Activated naive CD4-positive, alpha-beta T cell treated with anti-CD3 and anti-CD28 coated beads, Interleukin-2, amount 10 ng/mL, durations not matched to agents 7 days and 5 days (primary cell): ENCODE measurements at regions of chr5 and their contacts with region 1.

Region 1: GRCh38 chr5:138077065-138077696 is 6.7 kb upstream of the WNT8A start:
- DNase-seq: peak; percentile 71
- H3K4me3 Mint-ChIP-seq: no peak overlapping the region
- H3K27ac Mint-ChIP-seq: no peak overlapping the region
- H3K4me1 Mint-ChIP-seq: peaks cover 18% of the 10 kb centered on the region
- H3K27me3 Mint-ChIP-seq: peaks cover 3% of the 10 kb centered on the region

Region 2: GRCh38 chr5:137954131-137954879 is 122.9 kb before region 1 on chr5:
- CTCF ChIA-PET with region 1: no interaction called
- DNase-seq: no peak
- H3K4me3 Mint-ChIP-seq: no peak overlapping the region
- H3K27ac Mint-ChIP-seq: peak overlapping the region; percentile 49
- H3K4me1 Mint-ChIP-seq: no peaks in the 10 kb centered on the region
- H3K27me3 Mint-ChIP-seq: no peaks in the 10 kb centered on the region

Region 3: DNA sequence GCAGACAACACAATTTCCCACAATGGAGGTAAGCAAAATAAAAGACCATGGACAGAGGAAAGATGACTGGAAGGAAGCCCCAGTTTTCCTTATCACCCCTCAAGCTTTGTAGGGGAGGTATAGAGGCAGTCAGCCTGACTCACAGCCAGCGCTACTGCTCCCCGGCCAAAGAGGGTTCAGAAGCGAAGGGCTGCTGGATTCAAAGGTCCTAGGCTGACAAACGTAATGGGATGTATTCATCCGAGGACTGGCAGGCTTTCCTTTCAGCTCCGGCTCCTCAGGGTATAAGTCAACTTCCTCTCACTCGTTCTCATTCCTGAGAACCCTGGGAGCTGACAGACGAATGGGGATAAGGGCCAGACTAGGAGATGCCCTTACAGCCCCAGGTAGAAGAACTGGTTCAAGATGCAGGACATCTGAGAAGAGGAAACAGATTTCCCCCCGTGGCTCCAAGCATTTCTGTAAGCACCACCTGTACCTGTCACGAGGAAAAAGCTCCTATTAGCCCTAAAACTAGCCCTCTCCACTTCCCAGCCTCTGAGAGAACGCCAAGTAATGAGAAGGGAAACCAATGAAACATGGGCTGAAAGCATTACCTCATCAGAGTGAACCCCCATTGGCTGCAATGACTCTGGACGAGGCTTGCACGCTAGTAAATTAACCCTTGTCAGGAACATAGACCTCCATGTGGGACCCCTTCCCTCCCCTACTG is 22.2 kb before region 1 on chr5:
- CTCF ChIA-PET with region 1: no interaction called
- DNase-seq: no peak
- H3K4me3 Mint-ChIP-seq: no peak overlapping the region
- H3K27ac Mint-ChIP-seq: no peak overlapping the region
- H3K4me1 Mint-ChIP-seq: peaks cover 8% of the 10 kb centered on the region
- H3K27me3 Mint-ChIP-seq: peaks cover 17% of the 10 kb centered on the region

Region 4: GRCh38 chr5:138091685-138092084 is 14.5 kb after region 1 on chr5:
- CTCF ChIA-PET with region 1: interaction called, 10 read pairs
- DNase-seq: no peak
- H3K4me3 Mint-ChIP-seq: no peak overlapping the region
- H3K27ac Mint-ChIP-seq: no peak overlapping the region
- H3K4me1 Mint-ChIP-seq: peaks cover 40% of the 10 kb centered on the region
- H3K27me3 Mint-ChIP-seq: peaks cover 15% of the 10 kb centered on the region

Region 5: DNA sequence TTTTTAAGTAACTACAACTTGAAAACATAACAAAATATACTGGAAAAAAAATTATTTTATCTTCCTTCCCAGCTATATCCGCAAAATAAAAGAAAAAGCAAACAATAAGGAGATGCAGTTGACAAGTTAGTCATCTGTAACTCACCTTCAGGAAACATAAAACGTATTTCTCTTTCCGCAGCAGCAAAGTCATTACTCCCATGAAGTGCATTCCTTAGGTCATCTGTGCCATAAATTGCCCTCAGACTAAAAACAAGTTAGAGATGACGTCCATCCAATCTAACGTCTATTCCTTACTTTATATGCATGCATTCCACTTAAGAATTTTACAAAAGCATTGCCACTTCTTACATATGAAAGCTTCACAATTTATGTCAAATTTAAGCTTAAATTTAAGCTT is 51.2 kb after region 1 on chr5:
- CTCF ChIA-PET with region 1: interaction called, 175 read pairs
- DNase-seq: no peak
- H3K4me3 Mint-ChIP-seq: no peak overlapping the region
- H3K27ac Mint-ChIP-seq: no peak overlapping the region
- H3K4me1 Mint-ChIP-seq: peaks cover 3% of the 10 kb centered on the region
- H3K27me3 Mint-ChIP-seq: peaks cover 19% of the 10 kb centered on the region